Activated naive CD4-positive, alpha-beta T cell treated with anti-CD3 and anti-CD28 coated beads for 36 hours (primary cell): ENCODE measurements at regions of chr6 and their contacts with region 1.

Region 1: DNA sequence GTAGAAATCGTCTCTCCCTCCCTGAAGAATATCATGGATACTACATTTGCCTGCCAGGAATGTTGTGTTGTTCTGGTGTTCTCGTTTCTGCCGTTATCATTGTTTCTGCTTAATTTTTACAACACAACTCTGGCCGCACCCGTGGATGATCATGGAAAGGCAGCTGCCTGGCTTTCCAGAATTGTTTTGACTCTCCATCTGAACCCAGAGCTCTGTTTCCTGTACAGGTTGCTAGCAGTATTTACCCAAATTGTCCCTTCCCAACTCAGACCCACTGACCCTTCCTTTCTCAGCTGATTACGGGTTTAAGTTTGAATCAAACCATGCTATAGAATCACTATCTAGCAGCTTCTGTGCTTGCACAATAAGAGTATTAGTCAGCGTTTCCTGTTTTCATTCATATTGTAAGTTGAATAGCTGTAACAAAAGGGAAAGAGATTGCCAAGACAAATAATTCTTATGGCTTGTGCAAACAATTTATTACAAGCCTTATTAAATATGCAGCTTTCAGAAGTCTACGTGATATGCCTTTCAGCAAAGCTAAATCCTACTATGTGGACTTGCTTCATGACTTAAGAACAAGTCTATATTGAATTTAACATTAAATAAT is 139.0 kb downstream of the MTHFD1L start:
- DNase-seq: no peak
- H3K4me3 Mint-ChIP-seq: no peak overlapping the region
- H3K27ac Mint-ChIP-seq: peak overlapping the region; percentile 7
- H3K4me1 Mint-ChIP-seq: peaks cover 4% of the 10 kb centered on the region
- H3K27me3 Mint-ChIP-seq: no peaks in the 10 kb centered on the region

Region 2: GRCh38 chr6:150753371-150754064 is 251.0 kb before region 1 on chr6:
- CTCF ChIA-PET with region 1: no interaction called
- intact Hi-C with region 1: no loop called
- DNase-seq: no peak
- H3K4me3 Mint-ChIP-seq: no peak overlapping the region
- H3K27ac Mint-ChIP-seq: no peak overlapping the region
- H3K4me1 Mint-ChIP-seq: no peaks in the 10 kb centered on the region
- H3K27me3 Mint-ChIP-seq: peaks cover 3% of the 10 kb centered on the region

Region 3: DNA sequence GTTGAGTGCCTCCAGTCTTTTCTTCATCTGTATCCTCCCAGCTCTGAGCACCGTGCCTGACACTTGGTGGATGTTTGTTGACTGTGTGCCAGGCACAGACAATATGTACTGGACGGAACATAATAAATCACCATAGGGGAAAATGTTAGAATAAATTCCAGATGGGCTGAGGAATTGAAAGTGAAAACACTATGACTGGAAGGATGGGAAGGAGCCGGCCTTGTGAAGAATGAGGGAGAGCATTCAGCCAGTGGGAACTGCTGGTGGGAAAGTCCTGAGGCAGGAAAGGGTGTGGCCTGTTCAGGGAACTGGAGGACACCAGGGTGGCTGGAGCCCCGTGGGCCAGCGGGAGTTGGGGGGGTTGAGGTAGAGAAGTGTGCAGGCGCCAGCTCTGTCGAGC is 63.6 kb before region 1 on chr6:
- CTCF ChIA-PET with region 1: no interaction called
- intact Hi-C with region 1: no loop called
- DNase-seq: no peak
- H3K4me3 Mint-ChIP-seq: no peak overlapping the region
- H3K27ac Mint-ChIP-seq: no peak overlapping the region
- H3K4me1 Mint-ChIP-seq: no peaks in the 10 kb centered on the region
- H3K27me3 Mint-ChIP-seq: no peaks in the 10 kb centered on the region

Region 4: GRCh38 chr6:150987371-150987828 is 17.1 kb before region 1 on chr6:
- CTCF ChIA-PET with region 1: no interaction called
- intact Hi-C with region 1: loop called (anchors 1 kb)
- DNase-seq: peak; percentile 79
- H3K4me3 Mint-ChIP-seq: no peak overlapping the region
- H3K27ac Mint-ChIP-seq: peak overlapping the region; percentile 90
- H3K4me1 Mint-ChIP-seq: peaks cover 7% of the 10 kb centered on the region
- H3K27me3 Mint-ChIP-seq: no peaks in the 10 kb centered on the region